ENCODE measurements at regions of chr10 and their contacts with region 1.

Region 1: GRCh38 chr10:14588084-14588937 is 186.4 kb downstream of the FAM107B start:
- DNase-seq: peak; percentile 56
- ATAC-seq: peak; percentile 38
- H3K4me3 Mint-ChIP-seq: peak overlapping the region; percentile 60
- H3K27ac Mint-ChIP-seq: peak overlapping the region; percentile 94
- H3K4me1 Mint-ChIP-seq: peaks cover 89% of the 10 kb centered on the region
- H3K27me3 Mint-ChIP-seq: no peaks in the 10 kb centered on the region

Region 2: DNA sequence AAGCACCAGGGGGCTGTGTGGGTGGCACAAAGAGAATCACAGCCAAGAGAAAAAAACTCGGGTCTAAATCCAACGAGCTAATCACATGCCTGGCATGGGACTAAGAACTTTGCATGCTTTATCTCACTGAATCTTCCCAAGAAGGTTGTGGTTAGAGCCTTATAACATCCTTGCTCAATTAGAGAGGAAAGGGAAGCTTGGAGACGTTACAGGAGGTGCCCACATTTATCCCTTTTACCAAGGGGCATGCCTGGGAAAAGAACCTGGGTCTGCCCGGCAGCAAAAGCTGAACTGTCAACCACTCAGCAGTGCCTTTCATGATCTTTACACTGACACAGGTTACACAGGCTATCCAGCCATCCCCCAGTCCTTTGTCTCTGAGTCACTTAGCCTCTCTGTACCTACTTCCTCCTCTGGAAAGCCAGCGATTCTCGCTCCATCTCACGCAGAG is 811.4 kb before region 1 on chr10:
- CTCF ChIA-PET with region 1: no interaction called
- POLR2A ChIA-PET with region 1: no interaction called
- DNase-seq: no peak
- ATAC-seq: no peak
- H3K4me3 Mint-ChIP-seq: no peak overlapping the region
- H3K27ac Mint-ChIP-seq: no peak overlapping the region
- H3K4me1 Mint-ChIP-seq: no peaks in the 10 kb centered on the region
- H3K27me3 Mint-ChIP-seq: peaks cover 18% of the 10 kb centered on the region

Region 3: GRCh38 chr10:14356921-14357320 is 231.4 kb before region 1 on chr10:
- CTCF ChIA-PET with region 1: no interaction called
- POLR2A ChIA-PET with region 1: no interaction called
- DNase-seq: no peak
- ATAC-seq: no peak
- H3K4me3 Mint-ChIP-seq: no peak overlapping the region
- H3K27ac Mint-ChIP-seq: no peak overlapping the region
- H3K4me1 Mint-ChIP-seq: no peaks in the 10 kb centered on the region
- H3K27me3 Mint-ChIP-seq: peaks cover 16% of the 10 kb centered on the region

Region 4: DNA sequence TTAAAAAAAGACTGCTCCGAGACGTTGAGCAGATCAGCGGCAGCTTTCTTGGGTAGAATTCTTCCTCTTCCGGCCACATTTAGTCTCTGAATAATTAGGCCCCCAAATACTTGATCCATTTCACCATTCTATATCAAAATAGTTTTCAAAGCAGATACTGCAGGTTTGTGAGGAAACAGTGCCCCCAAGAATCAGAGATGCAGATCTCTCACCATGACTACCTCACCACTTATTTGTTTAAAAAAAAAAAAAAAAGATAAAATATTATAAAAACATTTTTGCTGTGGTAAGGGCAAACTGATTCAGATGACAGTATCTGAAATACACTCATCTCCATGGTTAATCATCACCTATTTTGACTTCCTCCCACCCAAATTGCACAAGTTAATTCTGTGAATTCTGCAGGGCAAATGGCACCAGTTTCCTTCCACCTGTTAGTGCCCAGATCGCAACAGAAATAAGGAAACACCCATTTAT is 24.0 kb before region 1 on chr10:
- CTCF ChIA-PET with region 1: interaction called, 25 read pairs
- POLR2A ChIA-PET with region 1: interaction called, 17 read pairs
- DNase-seq: no peak
- ATAC-seq: peak; percentile 32
- H3K4me3 Mint-ChIP-seq: peak overlapping the region; percentile 67
- H3K27ac Mint-ChIP-seq: peak overlapping the region; percentile 87
- H3K4me1 Mint-ChIP-seq: peaks cover 88% of the 10 kb centered on the region
- H3K27me3 Mint-ChIP-seq: no peaks in the 10 kb centered on the region

Region 5: DNA sequence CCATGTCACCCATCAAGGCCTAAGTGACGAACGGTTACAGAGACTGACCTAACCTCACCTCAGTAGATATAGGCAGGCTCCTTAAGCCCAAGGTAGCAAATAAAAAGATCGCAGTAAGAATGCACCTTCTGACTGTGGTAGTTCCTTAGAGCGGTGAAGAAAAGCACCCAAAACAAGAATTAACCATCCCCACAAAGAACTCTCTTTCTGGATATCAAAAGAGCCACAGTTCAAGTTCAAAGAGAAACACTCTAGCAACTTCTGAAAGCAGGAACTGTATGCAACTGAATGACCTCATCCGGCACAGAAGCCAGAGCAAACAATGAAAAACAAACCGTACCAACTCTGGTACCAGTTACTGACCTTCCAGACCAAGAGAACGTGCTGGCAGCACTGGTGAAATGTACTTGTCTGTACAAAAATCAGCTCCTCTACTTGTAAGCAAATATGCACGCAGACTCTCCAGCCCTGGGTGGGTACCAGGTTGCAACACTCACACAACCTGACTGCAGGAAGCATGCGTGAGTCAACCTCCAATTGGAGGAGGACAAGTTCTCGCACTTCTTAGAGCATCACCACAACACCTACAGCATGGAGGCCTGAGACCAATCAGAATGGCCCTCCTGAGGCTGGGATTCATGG is 16.3 kb before region 1 on chr10:
- CTCF ChIA-PET with region 1: interaction called, 9 read pairs
- POLR2A ChIA-PET with region 1: interaction called, 17 read pairs
- DNase-seq: peak; percentile 77
- ATAC-seq: peak; percentile 71
- H3K4me3 Mint-ChIP-seq: peak overlapping the region; percentile 87
- H3K27ac Mint-ChIP-seq: peak overlapping the region; percentile 96
- H3K4me1 Mint-ChIP-seq: peaks cover 87% of the 10 kb centered on the region
- H3K27me3 Mint-ChIP-seq: no peaks in the 10 kb centered on the region

Region 6: DNA sequence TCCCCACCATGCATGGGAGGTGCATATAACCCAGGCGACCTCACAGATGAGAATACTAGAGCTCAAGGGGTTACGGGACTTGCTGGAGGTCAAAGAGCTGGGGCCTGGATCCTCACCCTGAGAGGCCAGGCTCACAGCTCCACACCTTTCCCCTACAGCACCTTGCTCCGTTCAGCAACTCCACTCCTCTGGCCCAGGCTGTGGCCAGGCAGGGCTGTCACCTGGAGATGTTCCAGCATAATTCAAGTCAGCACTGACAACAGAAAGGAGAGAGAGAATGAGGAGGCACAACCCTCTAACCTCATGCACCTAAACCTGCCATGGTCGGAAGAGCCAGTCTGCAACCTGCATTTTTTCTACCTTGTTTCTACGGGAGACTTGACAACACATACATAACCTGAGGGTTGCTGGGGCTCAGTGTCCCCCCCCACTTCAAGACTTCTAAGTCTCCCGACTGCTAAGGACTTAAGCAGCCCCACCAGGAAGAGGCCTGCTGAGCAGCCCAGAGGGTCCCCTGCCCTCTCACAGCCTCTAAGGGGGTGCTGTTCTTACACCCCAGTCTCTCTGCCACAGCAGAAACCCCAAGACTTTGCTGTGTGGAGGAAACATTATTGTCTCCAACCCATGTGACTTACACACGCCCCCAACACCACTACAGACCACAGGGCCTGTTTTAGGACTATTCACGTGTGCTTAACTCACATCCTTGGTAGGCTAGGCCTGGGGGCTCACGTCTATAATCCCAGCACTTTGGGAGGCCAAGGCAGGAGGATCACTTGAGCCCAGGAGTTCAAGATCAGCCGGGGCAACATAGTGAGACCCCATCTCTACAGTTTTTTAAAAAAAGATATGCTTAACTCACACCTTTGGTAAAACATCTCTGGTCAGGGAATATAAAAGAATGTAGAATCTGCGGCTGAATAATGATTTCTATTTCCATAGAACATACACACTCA is 10.8 kb after region 1 on chr10:
- CTCF ChIA-PET with region 1: interaction called, 4 read pairs
- POLR2A ChIA-PET with region 1: interaction called, 11 read pairs
- DNase-seq: no peak
- ATAC-seq: peak; percentile 20
- H3K4me3 Mint-ChIP-seq: no peak overlapping the region
- H3K27ac Mint-ChIP-seq: peak overlapping the region; percentile 65
- H3K4me1 Mint-ChIP-seq: peaks cover 72% of the 10 kb centered on the region
- H3K27me3 Mint-ChIP-seq: no peaks in the 10 kb centered on the region

Region 7: DNA sequence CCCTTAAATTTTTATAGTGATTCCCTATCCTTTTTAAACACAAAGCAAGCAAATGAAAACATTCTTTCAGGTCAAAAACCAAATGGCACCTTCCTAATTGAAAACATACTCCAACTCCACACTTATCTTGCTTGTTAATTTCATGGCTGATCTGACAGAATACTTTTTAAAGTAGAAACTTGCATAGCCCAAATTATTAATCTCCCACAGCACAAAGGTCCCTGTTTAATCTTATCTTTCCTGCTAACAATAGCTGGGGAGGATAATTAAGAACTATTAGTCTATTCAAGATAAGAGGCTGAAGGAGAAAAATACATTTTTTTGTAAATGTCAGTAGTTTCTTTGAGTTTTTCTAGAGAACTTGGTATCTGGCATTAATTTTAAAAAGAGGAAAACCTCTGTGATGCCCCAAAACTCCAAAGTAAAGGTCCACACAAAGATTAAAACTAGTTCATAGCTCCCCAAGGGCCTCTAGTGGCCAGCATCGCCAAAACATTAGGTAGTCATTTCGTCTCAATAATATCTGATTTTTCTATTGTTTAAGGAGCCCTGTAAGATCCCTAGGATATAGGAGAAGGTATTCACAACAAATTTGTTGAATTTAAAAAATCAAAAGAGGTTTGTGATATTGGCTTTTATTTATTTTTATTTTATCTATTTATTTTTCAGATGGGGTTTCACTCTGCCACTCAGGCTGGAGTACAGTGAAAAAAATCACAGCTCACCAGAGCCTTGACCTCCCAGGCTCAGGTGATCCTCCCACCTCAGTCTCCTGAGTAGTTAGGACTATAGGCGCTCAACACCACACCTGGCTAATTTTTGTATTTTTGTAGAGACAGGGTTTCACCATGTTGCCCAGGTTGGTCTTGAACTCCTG is 234.8 kb after region 1 on chr10:
- CTCF ChIA-PET with region 1: interaction called, 14 read pairs
- POLR2A ChIA-PET with region 1: interaction called, 3 read pairs
- DNase-seq: peak; percentile 61
- ATAC-seq: no peak
- H3K4me3 Mint-ChIP-seq: no peak overlapping the region
- H3K27ac Mint-ChIP-seq: no peak overlapping the region
- H3K4me1 Mint-ChIP-seq: peaks cover 8% of the 10 kb centered on the region
- H3K27me3 Mint-ChIP-seq: peaks cover 13% of the 10 kb centered on the region